T-cell (primary cell): ENCODE measurements at regions of chr7 and their contacts with region 1.

Region 1: GRCh38 chr7:29988424-29989256 is 961 bp downstream of the SCRN1 start:
- DNase-seq: peak in 23 of 35 experiments; percentile 3 to 36 (median 18)
- ATAC-seq: peak; percentile 51 to 67 (median 63)
- H3K4me3 ChIP-seq: peak overlapping the region; percentile 58 to 77
- H3K4me3 Mint-ChIP-seq: peak overlapping the region; percentile 65 to 82 (median 81)
- H3K27ac ChIP-seq: no peak overlapping the region
- H3K27ac Mint-ChIP-seq: peak overlapping the region; percentile 46 to 48
- H3K4me1 ChIP-seq: peaks cover 2 to 10% of the 10 kb centered on the region in 2 experiments
- H3K4me1 Mint-ChIP-seq: peaks cover 10 to 23% (median 13%) of the 10 kb centered on the region in 3 donors
- H3K27me3 ChIP-seq: peaks cover 0 to 43% of the 10 kb centered on the region in 2 experiments
- H3K27me3 Mint-ChIP-seq: peaks cover 38 to 56% of the 10 kb centered on the region in 2 donors

Region 2: DNA sequence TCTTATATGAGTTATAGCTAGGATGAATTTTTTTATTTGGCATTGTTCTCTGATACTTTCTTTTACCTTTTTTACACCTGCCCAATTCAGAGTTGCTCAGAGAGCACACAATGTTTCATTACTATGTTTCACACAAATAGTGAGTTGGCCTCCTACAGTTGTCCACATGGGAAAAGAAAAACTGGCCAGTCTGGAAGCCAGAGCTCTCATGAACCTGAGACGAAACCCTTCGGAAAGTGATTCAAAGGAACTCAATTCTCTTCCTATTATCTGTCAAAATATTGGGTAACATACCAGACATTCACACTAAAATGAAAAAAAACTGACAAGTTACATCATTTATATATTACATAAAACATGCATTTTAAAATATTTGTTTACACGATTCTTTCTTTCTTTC is 14.4 kb before region 1 on chr7:
- CTCF ChIA-PET with region 1: no interaction called
- POLR2A ChIA-PET with region 1: interaction called in 1 of 2 experiments, 10 read pairs
- DNase-seq: no peak
- ATAC-seq: no peak
- H3K4me3 ChIP-seq: no peak overlapping the region
- H3K4me3 Mint-ChIP-seq: no peak overlapping the region
- H3K27ac ChIP-seq: no peak overlapping the region
- H3K27ac Mint-ChIP-seq: no peak overlapping the region
- H3K4me1 ChIP-seq: peaks cover 2 to 19% of the 10 kb centered on the region in 2 experiments
- H3K4me1 Mint-ChIP-seq: peaks cover 8 to 15% (median 11%) of the 10 kb centered on the region in 3 donors
- H3K27me3 ChIP-seq: peaks cover 0 to 14% of the 10 kb centered on the region in 2 experiments
- H3K27me3 Mint-ChIP-seq: peaks cover 6 to 26% of the 10 kb centered on the region in 2 donors